ENCODE measurements at regions of chr2 and their contacts with region 1.

Region 1: GRCh38 chr2:26088032-26088643 is 54.3 kb downstream of the RAB10 start:
- DNase-seq: peak; percentile 44
- ATAC-seq: peak; percentile 51
- H3K4me3 ChIP-seq: no peak overlapping the region
- H3K4me3 Mint-ChIP-seq: no peak overlapping the region
- H3K27ac ChIP-seq: no peak overlapping the region
- H3K27ac Mint-ChIP-seq: no peak overlapping the region
- H3K4me1 ChIP-seq: no peaks in the 10 kb centered on the region
- H3K4me1 Mint-ChIP-seq: peaks cover 42% of the 10 kb centered on the region
- H3K27me3 ChIP-seq: no peaks in the 10 kb centered on the region
- H3K27me3 Mint-ChIP-seq: no peaks in the 10 kb centered on the region
- CTCF ChIP-seq: peak; percentile 84

Region 2: DNA sequence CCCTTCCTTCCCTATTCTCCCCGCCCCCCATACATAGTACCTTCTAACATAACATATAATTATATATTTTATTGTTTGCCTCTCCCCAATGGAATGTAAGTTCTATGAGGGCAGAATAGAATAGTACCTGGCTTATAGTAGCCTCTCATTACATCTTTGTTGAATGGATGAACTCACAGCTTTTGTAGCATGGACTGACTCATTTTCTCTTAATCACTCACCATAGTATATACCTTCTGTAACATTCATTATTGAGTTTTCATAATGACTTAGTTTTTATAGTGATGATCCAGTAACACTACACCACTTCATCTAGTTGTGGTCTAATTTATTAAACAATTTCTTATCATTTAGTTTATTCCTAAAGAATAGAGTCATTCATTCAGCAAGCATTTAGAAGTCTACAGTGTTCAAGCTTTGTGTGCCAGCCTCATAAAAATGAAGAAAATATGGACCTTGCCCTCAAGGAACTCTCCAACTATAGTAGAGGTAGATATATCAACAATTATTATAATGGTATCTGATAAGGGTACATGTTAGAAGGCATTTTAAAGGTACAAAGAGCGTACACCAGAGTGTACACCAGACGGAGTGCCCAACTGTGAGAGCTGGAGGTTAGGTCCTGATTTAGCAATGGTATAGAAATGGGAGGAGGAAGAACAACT is 1566.0 kb before region 1 on chr2:
- CTCF ChIA-PET with region 1: no interaction called
- POLR2A ChIA-PET with region 1: no interaction called
- intact Hi-C with region 1: no loop called
- DNase-seq: no peak
- ATAC-seq: no peak
- H3K4me3 ChIP-seq: no peak overlapping the region
- H3K4me3 Mint-ChIP-seq: no peak overlapping the region
- H3K27ac ChIP-seq: no peak overlapping the region
- H3K27ac Mint-ChIP-seq: no peak overlapping the region
- H3K4me1 ChIP-seq: peaks cover 0 to 8% of the 10 kb centered on the region in 2 donors
- H3K4me1 Mint-ChIP-seq: peaks cover 28% of the 10 kb centered on the region
- H3K27me3 ChIP-seq: no peaks in the 10 kb centered on the region
- H3K27me3 Mint-ChIP-seq: no peaks in the 10 kb centered on the region
- CTCF ChIP-seq: no peak

Region 3: GRCh38 chr2:26054598-26055348 is 33.4 kb before region 1 on chr2:
- CTCF ChIA-PET with region 1: no interaction called
- POLR2A ChIA-PET with region 1: interaction called, 10 read pairs
- intact Hi-C with region 1: no loop called
- DNase-seq: no peak
- ATAC-seq: no peak
- H3K4me3 ChIP-seq: no peak overlapping the region
- H3K4me3 Mint-ChIP-seq: no peak overlapping the region
- H3K27ac ChIP-seq: no peak overlapping the region
- H3K27ac Mint-ChIP-seq: no peak overlapping the region
- H3K4me1 ChIP-seq: peaks cover 8 to 9% of the 10 kb centered on the region in 2 donors
- H3K4me1 Mint-ChIP-seq: peaks cover 46% of the 10 kb centered on the region
- H3K27me3 ChIP-seq: no peaks in the 10 kb centered on the region
- H3K27me3 Mint-ChIP-seq: no peaks in the 10 kb centered on the region
- CTCF ChIP-seq: no peak

Region 4: DNA sequence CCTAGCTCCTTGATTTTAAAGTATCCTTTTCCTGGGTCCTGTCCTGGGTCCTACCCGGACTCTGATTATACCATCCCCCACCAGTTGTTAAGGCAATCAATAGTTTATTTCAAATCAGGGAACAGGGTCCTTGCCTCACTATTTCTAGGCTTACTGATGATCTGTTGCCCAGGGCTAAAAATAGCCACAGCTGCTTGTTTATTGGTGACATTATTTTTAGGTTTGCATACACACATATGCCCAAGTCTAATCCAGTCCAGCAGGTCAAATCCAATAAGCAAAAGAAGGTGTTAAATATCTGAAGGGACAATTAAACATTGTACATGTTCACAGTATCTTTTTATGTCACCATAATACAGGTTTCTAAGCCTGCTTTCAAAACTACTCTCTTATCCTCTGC is 11.8 kb after region 1 on chr2:
- CTCF ChIA-PET with region 1: interaction called, 4 read pairs
- POLR2A ChIA-PET with region 1: interaction called, 15 read pairs
- intact Hi-C with region 1: no loop called
- DNase-seq: no peak
- ATAC-seq: no peak
- H3K4me3 ChIP-seq: no peak overlapping the region
- H3K4me3 Mint-ChIP-seq: no peak overlapping the region
- H3K27ac ChIP-seq: no peak overlapping the region
- H3K27ac Mint-ChIP-seq: no peak overlapping the region
- H3K4me1 ChIP-seq: no peaks in the 10 kb centered on the region
- H3K4me1 Mint-ChIP-seq: peaks cover 24% of the 10 kb centered on the region
- H3K27me3 ChIP-seq: no peaks in the 10 kb centered on the region
- H3K27me3 Mint-ChIP-seq: no peaks in the 10 kb centered on the region
- CTCF ChIP-seq: no peak

Region 5: GRCh38 chr2:26144953-26145680 is 57.0 kb after region 1 on chr2:
- CTCF ChIA-PET with region 1: interaction called, 5 read pairs
- POLR2A ChIA-PET with region 1: no interaction called
- intact Hi-C with region 1: loop called (anchors 1 kb)
- DNase-seq: peak; percentile 69
- ATAC-seq: peak; percentile 73
- H3K4me3 ChIP-seq: no peak overlapping the region
- H3K4me3 Mint-ChIP-seq: peak overlapping the region; percentile 24
- H3K27ac ChIP-seq: no peak overlapping the region
- H3K27ac Mint-ChIP-seq: no peak overlapping the region
- H3K4me1 ChIP-seq: no peaks in the 10 kb centered on the region
- H3K4me1 Mint-ChIP-seq: no peaks in the 10 kb centered on the region
- H3K27me3 ChIP-seq: peaks cover 0 to 3% (median 0%) of the 10 kb centered on the region in 4 experiments
- H3K27me3 Mint-ChIP-seq: peaks cover 10% of the 10 kb centered on the region
- CTCF ChIP-seq: peak; percentile 75

Region 6: GRCh38 chr2:26577434-26578112 is 489.4 kb after region 1 on chr2:
- CTCF ChIA-PET with region 1: interaction called, 5 read pairs
- POLR2A ChIA-PET with region 1: no interaction called
- intact Hi-C with region 1: loop called (anchors 5 kb)
- DNase-seq: peak; percentile 67
- ATAC-seq: peak; percentile 88
- H3K4me3 ChIP-seq: no peak overlapping the region
- H3K4me3 Mint-ChIP-seq: no peak overlapping the region
- H3K27ac ChIP-seq: no peak overlapping the region
- H3K27ac Mint-ChIP-seq: no peak overlapping the region
- H3K4me1 ChIP-seq: no peaks in the 10 kb centered on the region
- H3K4me1 Mint-ChIP-seq: peaks cover 2% of the 10 kb centered on the region
- H3K27me3 ChIP-seq: peaks cover 0 to 16% (median 0%) of the 10 kb centered on the region in 4 experiments
- H3K27me3 Mint-ChIP-seq: peaks cover 48% of the 10 kb centered on the region
- CTCF ChIP-seq: peak; percentile 99